A549 (cell line): ENCODE measurements at regions of chr20 and their contacts with region 1.

Region 1: GRCh38 chr20:58870239-58871014 is 17.9 kb downstream of the GNAS start:
- DNase-seq: peak; percentile 63 to 78
- ATAC-seq: peak; percentile 93 to 98
- H3K4me3 ChIP-seq: no peak overlapping the region
- H3K27ac ChIP-seq: no peak overlapping the region
- H3K4me1 ChIP-seq: no peaks in the 10 kb centered on the region
- CTCF ChIP-seq: peak; percentile 85
- EP300 ChIP-seq: no peak
- POLR2A ChIP-seq: no peak
- RAD21 ChIP-seq: peak; percentile 88 to 89

Region 2: GRCh38 chr20:58598211-58599014 is 272.0 kb before region 1 on chr20:
- CTCF ChIA-PET with region 1: no interaction called
- POLR2A ChIA-PET with region 1: no interaction called
- DNase-seq: no peak
- ATAC-seq: no peak
- H3K4me3 ChIP-seq: no peak overlapping the region
- H3K27ac ChIP-seq: no peak overlapping the region
- H3K4me1 ChIP-seq: no peaks in the 10 kb centered on the region
- CTCF ChIP-seq: no peak
- EP300 ChIP-seq: no peak
- POLR2A ChIP-seq: no peak
- RAD21 ChIP-seq: no peak

Region 3: DNA sequence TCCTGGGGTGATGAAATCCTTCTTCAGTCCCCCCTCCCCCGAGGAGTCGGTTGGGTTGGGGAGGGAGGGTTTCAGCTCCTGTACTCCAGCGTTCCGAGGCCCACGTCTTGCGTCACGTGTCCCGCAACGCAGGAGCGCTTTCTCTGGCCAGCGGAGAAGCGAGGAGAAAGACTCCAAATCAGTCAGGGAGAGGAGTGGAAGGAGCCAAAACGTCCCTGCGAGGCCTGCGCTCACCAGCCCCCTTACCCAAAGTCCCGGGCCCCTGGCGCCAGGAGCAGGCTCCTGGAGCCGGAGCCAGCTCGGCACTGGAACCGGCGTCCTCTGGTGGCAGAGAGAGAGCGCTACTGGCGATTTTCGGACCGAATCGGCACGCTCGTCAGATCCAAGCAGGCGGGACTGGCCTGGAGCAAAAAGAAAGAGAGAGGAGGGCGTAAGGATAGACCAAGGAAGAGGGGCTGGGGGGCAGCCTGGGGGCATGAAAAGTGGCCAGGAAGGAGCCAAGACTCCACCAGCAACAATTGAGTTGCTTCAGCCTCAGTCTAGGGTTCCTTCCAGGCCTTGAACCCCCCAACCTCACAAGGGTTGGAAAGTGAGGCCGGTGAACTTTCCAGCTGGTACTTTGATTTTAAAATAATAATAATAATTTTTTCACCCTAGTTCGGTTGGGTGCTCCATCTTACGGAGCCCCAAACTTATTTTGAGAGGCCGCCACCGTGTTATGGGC is 17.7 kb before region 1 on chr20 and contains the start of gene GNAS:
- CTCF ChIA-PET with region 1: interaction called, 10 read pairs
- POLR2A ChIA-PET with region 1: no interaction called
- DNase-seq: peak; percentile 62 to 72
- ATAC-seq: peak; percentile 81 to 94; a peak in 5 of 6 replicates
- H3K4me3 ChIP-seq: peak within 1 kb of the TSS; percentile 36; the same call in 2 of the 3 replicates
- H3K27ac ChIP-seq: peak within 1 kb of the TSS in 1 of 2 experiments; percentile 51; a peak in 1 of 6 replicates
- H3K4me1 ChIP-seq: no peaks in the 10 kb centered on the region
- CTCF ChIP-seq: peak; percentile 59
- EP300 ChIP-seq: no peak
- POLR2A ChIP-seq: no peak
- RAD21 ChIP-seq: peak; percentile 39 to 47; a peak in 4 of 5 replicates
- polyA plus RNA-seq, gene GNAS: 534 and 738 TPM in 2 replicates

Region 4: DNA sequence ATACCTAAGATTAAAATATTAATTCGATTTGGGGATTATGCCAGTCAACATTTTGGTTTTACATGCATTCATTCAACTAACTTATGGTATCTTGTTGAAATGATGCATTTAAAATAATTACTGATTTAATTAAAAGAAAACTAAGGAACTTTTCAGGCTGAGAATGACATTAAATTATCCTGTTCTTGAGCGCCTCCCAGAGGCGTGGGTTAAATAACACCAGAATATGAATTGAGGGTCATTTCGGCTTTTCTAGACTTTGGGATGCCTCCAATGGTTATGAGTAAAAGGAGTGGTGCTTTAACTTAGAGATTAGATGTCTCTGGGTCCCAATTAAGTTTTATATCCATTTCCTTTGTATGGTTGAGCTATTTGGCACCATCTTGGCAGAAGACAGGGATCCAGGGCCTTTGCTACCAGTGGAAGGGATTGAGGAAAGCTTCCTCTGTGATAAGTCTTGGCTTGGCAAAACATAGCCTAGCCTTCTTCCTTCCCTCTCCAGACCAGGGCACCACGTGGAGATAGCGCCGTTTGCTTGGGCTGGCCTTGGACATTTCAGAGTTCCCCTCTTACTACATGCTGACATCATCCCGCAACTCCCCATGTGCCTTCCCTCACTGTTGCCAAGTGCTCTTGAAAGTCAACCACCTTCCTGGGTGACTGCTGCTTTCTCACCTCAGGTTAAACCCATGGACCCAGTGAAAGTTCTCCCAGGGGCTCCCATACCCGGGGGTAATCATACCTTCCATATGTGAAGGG is 10.7 kb after region 1 on chr20:
- CTCF ChIA-PET with region 1: interaction called, 41 read pairs
- POLR2A ChIA-PET with region 1: no interaction called
- DNase-seq: no peak
- ATAC-seq: no peak
- H3K4me3 ChIP-seq: no peak overlapping the region
- H3K27ac ChIP-seq: no peak overlapping the region
- H3K4me1 ChIP-seq: no peaks in the 10 kb centered on the region
- CTCF ChIP-seq: peak; percentile 29; the same call in 1 of the 3 replicates
- EP300 ChIP-seq: no peak
- POLR2A ChIP-seq: no peak
- RAD21 ChIP-seq: peak in 1 of 2 experiments; percentile 31; a peak in 2 of 5 replicates

Region 5: DNA sequence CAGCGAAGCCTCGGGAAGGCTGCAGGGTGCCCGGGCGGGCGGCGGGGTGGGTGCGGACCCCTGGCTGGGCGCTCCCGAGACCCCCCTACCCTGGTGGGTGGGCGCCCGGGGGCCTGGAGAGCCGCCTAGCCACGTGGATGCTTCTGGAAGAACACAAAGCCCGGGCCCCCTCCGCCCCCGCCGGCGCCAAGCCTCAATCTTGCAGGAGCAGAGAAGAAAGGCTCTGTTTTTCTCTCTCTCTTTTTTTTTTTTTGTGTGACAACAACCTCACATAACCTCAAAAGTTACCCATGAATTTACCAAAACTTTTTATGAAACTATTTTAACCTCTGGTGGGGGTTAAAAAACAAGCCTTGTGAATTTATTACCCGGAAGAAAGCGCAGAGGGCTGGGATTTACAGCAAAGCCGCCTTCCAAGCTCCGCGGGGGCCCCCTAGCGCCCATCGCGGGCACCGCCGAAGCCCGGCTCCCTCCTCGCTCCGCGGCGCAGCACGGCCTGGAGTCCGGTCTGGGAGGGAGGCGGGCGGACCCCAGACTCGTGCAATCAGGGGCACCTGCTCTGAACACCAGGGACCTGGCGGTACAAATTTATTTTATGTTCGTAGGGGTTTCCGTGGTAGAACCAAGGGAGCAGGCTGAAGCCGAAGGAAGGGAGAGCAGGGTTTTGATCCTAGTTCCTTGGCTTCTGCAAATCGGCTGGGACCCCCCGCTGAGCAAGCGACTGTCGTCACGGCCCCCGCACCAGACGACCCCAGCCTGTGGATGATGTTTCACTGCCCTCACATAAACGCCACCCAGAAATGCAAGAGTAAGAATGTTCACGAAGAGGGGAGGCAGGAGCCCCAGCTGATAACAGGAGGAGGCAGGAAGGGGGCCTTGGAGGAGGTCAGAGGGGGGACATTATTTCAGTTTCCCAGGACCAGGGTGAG is 352.1 kb after region 1 on chr20:
- CTCF ChIA-PET with region 1: interaction called, 32 read pairs
- POLR2A ChIA-PET with region 1: interaction called, 4 read pairs
- DNase-seq: peak; percentile 77
- ATAC-seq: peak; percentile 92 to 99
- H3K4me3 ChIP-seq: peak overlapping the region; percentile 51
- H3K27ac ChIP-seq: peak overlapping the region; percentile 81 to 91
- H3K4me1 ChIP-seq: peaks cover 6% of the 10 kb centered on the region; the same call in 2 of the 3 replicates
- CTCF ChIP-seq: peak; percentile 90
- EP300 ChIP-seq: no peak
- POLR2A ChIP-seq: no peak
- RAD21 ChIP-seq: peak; percentile 80 to 92

Region 6: DNA sequence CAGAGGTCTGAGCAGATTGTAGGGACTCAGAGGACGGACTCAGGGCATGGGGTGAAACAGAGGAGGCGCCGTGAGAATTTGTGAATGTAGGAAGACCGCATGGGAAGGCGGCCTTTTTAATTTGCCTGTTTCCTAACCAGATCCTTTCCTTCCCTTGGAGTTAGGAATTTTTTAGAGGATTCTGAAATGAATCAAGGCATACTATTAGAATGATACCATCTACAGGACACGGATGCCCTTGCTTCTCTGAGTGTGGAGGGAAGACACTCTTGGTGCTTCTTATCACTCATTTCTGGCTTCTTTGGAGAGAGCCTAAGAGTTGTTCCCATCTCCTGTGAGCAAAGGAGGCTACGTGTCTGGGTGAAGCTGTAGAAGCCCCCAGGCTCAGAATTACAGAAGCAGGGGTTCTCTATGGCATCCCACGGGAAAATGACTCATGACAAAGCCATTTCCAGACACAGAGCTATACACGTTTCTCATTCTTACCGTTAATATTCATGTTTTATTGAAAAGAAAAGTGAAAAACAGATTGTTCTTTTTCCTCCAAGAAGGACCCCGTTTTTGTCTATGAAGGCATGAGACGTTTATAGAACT is 578.5 kb after region 1 on chr20:
- CTCF ChIA-PET with region 1: interaction called, 56 read pairs
- POLR2A ChIA-PET with region 1: no interaction called
- DNase-seq: no peak
- ATAC-seq: no peak
- H3K4me3 ChIP-seq: no peak overlapping the region
- H3K27ac ChIP-seq: no peak overlapping the region
- H3K4me1 ChIP-seq: no peaks in the 10 kb centered on the region
- CTCF ChIP-seq: no peak
- EP300 ChIP-seq: no peak
- POLR2A ChIP-seq: no peak
- RAD21 ChIP-seq: no peak